ENCODE measurements at regions of chr10 and their contacts with region 1.

Region 1: DNA sequence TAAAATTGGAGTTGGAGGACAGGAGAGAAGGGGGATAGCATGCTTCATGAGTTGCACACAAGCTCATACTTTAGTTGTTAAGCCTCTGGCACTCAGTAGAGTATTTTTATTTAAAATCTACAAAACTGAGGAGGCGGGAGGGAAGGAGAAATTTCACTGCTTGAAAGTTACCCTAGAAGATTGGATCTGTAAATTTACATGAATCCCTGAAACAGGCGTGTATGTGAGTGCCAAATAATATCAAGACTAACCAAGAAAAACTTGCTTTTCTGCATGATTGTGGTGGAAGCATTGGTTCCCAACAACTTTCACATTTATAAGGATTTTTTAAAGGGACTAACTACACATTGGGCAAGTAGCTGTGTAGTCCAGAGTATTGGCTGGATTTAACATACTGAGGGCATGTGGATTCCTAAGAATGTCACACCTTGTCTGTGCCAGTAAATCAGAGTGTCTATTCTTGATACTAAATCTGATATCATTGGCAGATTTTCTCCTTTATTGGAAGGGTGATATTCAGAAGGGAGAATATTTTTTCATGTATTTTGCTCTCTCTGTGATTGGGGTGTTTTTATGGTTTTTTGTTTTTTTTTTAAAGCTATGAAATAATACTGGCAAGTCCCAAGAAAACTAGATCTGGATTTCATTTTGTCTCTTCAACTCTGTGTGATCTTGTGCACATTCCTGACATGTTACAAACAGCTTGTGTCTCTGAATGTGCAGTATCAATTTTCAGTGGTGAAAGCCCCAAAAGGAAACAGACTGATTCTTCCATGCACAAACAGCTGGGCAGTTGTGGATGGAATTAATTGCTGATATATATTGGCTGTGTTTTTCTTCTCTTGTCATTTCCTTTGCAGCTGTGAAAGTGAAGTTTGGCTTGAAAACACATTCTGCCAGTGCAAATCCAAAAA is 67.2 kb downstream of the ADD3 start:
- DNase-seq: peak; percentile 94
- ATAC-seq: peak; percentile 81
- H3K4me3 ChIP-seq: no peak overlapping the region
- H3K27ac ChIP-seq: peak overlapping the region; percentile 20; the same call in 1 of the 2 replicates
- H3K4me1 ChIP-seq: peaks cover 17% of the 10 kb centered on the region
- H3K27me3 ChIP-seq: no peaks in the 10 kb centered on the region
- CTCF ChIP-seq: no peak
- POLR2A ChIP-seq: no peak
- RAD21 ChIP-seq: no peak

Region 2: GRCh38 chr10:110058212-110058611 is 16.8 kb before region 1 on chr10:
- CTCF ChIA-PET with region 1: no interaction called
- POLR2A ChIA-PET with region 1: no interaction called
- dilution Hi-C with region 1: no loop called
- in situ Hi-C with region 1: no loop called
- intact Hi-C with region 1: loop called (anchors 2 kb)
- DNase-seq: no peak
- ATAC-seq: no peak
- H3K4me3 ChIP-seq: no peak overlapping the region
- H3K27ac ChIP-seq: no peak overlapping the region
- H3K4me1 ChIP-seq: peaks cover 13% of the 10 kb centered on the region
- H3K27me3 ChIP-seq: no peaks in the 10 kb centered on the region
- CTCF ChIP-seq: no peak
- POLR2A ChIP-seq: no peak
- RAD21 ChIP-seq: no peak